Activated CD4-positive, alpha-beta T cell treated with anti-CD3 and anti-CD28 coated beads, Interleukin-2, amount 10 ng/mL, durations not matched to agents 24 days and 14 days (primary cell): ENCODE measurements at regions of chr12 and their contacts with region 1.

Region 1: DNA sequence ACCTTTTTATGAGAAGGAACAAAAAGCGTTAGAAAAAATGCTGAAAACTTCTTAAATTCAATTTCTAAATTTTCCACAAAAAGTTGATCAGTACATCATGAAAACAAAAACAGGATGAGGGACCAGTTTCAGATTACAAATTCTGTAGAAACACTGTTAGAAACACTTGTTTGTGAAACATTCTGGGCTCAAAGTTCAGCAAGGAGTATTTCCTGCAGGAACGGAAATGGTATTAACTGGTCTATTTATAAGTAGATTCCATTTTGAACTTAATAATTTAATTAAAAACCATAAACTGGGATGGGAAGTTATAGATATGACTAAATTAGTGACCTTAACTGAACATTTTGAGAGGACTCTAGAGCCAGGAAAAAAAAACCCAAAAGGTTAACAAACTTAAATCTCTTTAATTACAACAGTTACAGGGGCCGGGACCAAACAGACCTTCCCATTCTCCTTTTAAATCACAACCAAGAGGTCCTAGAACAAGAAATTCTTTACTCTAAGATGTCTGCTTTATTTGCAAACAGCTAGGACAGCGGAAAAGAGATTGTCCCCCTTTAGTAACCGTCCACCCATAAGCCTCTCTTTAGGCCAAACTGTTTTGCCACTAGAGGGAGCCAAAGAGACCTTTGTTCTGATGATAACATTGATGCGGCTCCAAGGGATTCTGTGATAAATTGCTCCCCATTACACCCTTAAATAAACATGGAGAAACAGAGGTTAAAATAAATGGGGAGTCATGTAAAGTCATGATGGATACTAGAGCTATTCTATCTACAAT is 69.0 kb upstream of the RERGL start:
- DNase-seq: peak; percentile 74
- H3K4me3 Mint-ChIP-seq: no peak overlapping the region
- H3K27ac Mint-ChIP-seq: no peak overlapping the region
- H3K4me1 Mint-ChIP-seq: no peaks in the 10 kb centered on the region
- H3K27me3 Mint-ChIP-seq: no peaks in the 10 kb centered on the region

Region 2: GRCh38 chr12:18224745-18225144 is 65.8 kb after region 1 on chr12:
- intact Hi-C with region 1: loop called (anchors 2 kb)
- DNase-seq: no peak
- H3K4me3 Mint-ChIP-seq: no peak overlapping the region
- H3K27ac Mint-ChIP-seq: no peak overlapping the region
- H3K4me1 Mint-ChIP-seq: no peaks in the 10 kb centered on the region
- H3K27me3 Mint-ChIP-seq: no peaks in the 10 kb centered on the region

Region 3: GRCh38 chr12:18262514-18262913 is 103.5 kb after region 1 on chr12:
- intact Hi-C with region 1: no loop called
- DNase-seq: no peak
- H3K4me3 Mint-ChIP-seq: no peak overlapping the region
- H3K27ac Mint-ChIP-seq: no peak overlapping the region
- H3K4me1 Mint-ChIP-seq: no peaks in the 10 kb centered on the region
- H3K27me3 Mint-ChIP-seq: no peaks in the 10 kb centered on the region

Region 4: DNA sequence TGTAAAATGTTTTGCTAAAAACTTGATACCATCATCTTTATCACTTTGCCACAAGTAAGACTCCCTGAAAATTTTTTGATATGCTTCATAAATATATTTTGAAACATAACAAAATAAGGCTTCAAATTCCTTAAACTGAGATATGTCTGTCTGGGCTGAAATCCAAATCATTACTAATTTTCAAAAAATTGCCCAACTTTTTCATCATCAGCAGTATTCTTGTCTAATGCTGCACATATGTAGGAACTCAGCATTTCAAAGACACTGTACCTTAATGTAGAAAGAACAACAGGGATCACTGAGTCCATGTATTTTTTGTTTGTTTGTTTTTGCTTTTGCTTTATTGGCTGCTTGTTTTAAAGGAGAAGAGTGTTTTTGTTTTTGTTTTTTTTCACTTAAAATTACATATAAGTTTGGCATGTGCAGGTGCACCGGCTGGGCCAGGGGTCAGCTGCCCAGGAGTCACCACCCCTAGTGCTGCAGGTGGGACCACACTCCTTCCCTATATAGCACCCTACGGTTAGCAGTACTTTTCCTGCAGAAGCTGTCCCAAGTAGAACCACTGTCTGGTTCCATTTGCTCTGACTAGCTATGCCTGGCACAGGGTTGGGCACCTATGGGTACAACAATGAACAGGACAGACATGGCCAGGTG is 333.5 kb after region 1 on chr12:
- intact Hi-C with region 1: no loop called
- DNase-seq: no peak
- H3K4me3 Mint-ChIP-seq: no peak overlapping the region
- H3K27ac Mint-ChIP-seq: no peak overlapping the region
- H3K4me1 Mint-ChIP-seq: no peaks in the 10 kb centered on the region
- H3K27me3 Mint-ChIP-seq: no peaks in the 10 kb centered on the region